SK-N-SH (cell line): ENCODE measurements at regions of chr3 and their contacts with region 1.

Region 1: DNA sequence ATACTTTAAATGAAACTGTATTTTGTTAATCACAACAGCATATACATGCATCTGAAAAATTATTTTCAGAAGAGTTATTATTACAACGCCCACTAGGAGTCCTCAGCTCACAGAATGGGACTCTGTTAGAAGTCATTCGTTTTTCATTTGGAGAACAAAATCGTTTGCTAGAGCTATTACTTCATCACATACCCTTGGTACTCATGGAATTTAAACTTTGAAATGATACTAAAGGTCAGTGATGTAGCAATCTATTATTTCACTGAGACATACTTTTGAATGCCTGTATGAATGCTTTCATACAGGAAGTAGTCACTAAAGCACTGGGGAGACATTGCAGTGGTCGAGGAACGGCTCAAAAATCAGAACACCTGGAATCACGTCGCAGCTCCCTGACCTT is 198.1 kb downstream of the MBNL1 start:
- DNase-seq: peak; percentile 32
- H3K4me3 ChIP-seq: no peak overlapping the region
- H3K27ac ChIP-seq: no peak overlapping the region
- H3K4me1 ChIP-seq: no peaks in the 10 kb centered on the region; a peak in 1 of 4 replicates
- H3K27me3 ChIP-seq: no peaks in the 10 kb centered on the region
- CTCF ChIP-seq: peak; percentile 62
- EP300 ChIP-seq: no peak
- RAD21 ChIP-seq: peak; percentile 42

Region 2: DNA sequence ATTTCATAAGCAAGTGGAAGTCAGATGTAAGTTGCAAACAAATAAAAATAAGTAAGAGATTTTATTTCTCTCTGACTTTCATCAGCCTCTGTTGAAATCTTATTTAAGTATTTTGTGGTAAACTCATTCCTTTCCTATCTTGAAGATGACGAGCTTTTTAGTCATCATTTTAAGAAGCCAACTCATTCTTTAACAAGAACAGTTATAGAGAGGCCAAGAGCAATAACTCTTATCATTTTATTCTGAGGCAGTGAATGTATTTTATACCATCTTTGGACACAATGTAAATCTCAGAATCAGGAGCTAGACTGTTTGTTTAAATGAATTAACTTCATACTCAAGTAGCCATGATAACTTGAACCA is 345.5 kb before region 1 on chr3:
- CTCF ChIA-PET with region 1: no interaction called
- POLR2A ChIA-PET with region 1: no interaction called
- DNase-seq: no peak
- H3K4me3 ChIP-seq: no peak overlapping the region; a peak in 1 of 4 replicates
- H3K27ac ChIP-seq: peak overlapping the region; percentile 72 to 88; a peak in 3 of 4 replicates
- H3K4me1 ChIP-seq: peaks cover 0 to 23% of the 10 kb centered on the region in 2 experiments; a peak in 2 of 4 replicates
- H3K27me3 ChIP-seq: no peaks in the 10 kb centered on the region
- CTCF ChIP-seq: no peak
- EP300 ChIP-seq: peak; percentile 46 to 95
- RAD21 ChIP-seq: no peak

Region 3: GRCh38 chr3:152452318-152452717 is 14.5 kb before region 1 on chr3:
- CTCF ChIA-PET with region 1: interaction called, 11 read pairs
- POLR2A ChIA-PET with region 1: no interaction called
- DNase-seq: no peak
- H3K4me3 ChIP-seq: no peak overlapping the region
- H3K27ac ChIP-seq: no peak overlapping the region
- H3K4me1 ChIP-seq: no peaks in the 10 kb centered on the region; a peak in 2 of 4 replicates
- H3K27me3 ChIP-seq: no peaks in the 10 kb centered on the region
- CTCF ChIP-seq: no peak
- EP300 ChIP-seq: no peak
- RAD21 ChIP-seq: no peak

Region 4: GRCh38 chr3:152477422-152477821 is 10.6 kb after region 1 on chr3:
- CTCF ChIA-PET with region 1: interaction called, 12 read pairs
- POLR2A ChIA-PET with region 1: no interaction called
- DNase-seq: no peak
- H3K4me3 ChIP-seq: no peak overlapping the region
- H3K27ac ChIP-seq: no peak overlapping the region
- H3K4me1 ChIP-seq: peaks cover 0 to under 1% of the 10 kb centered on the region in 2 experiments; a peak in 1 of 4 replicates
- H3K27me3 ChIP-seq: no peaks in the 10 kb centered on the region
- CTCF ChIP-seq: no peak
- EP300 ChIP-seq: no peak
- RAD21 ChIP-seq: no peak